ENCODE measurements at regions of chr6 and their contacts with region 1.

Region 1: DNA sequence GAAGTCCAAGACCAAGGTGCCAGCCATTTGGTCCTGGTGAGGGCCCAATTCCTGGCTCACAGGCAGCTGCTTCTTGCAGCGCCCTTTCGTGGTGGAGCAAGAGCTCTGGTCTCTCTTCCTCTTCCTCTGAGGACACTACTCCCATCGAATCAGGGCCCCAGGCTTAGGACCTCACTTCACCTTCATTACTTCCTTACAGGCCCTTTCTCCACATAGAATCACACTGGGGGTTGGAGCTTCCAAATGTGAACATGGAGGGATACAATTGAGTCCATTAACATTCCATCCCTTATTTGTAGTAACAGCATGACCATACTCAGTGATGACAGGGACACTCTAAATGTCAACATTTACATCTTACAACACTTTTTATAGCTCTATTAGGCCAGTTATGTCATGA is 2.3 kb downstream of the RAMACL start:
- DNase-seq: no peak
- ATAC-seq: no peak
- H3K4me3 ChIP-seq: no peak overlapping the region
- H3K27ac ChIP-seq: no peak overlapping the region
- H3K4me1 ChIP-seq: no peaks in the 10 kb centered on the region
- H3K27me3 ChIP-seq: no peaks in the 10 kb centered on the region
- CTCF ChIP-seq: no peak

Region 2: GRCh38 chr6:166253281-166253681 is 330.9 kb before region 1 on chr6:
- CTCF ChIA-PET with region 1: no interaction called
- POLR2A ChIA-PET with region 1: no interaction called
- in situ Hi-C with region 1: no loop called
- intact Hi-C with region 1: no loop called
- DNase-seq: no peak
- ATAC-seq: no peak
- H3K4me3 ChIP-seq: peak overlapping the region; percentile 4 to 5; a peak in 2 of 4 replicates
- H3K27ac ChIP-seq: no peak overlapping the region
- H3K4me1 ChIP-seq: no peaks in the 10 kb centered on the region
- H3K27me3 ChIP-seq: peaks cover 9% of the 10 kb centered on the region
- CTCF ChIP-seq: no peak

Region 3: GRCh38 chr6:166456395-166457156 is 127.6 kb before region 1 on chr6:
- CTCF ChIA-PET with region 1: no interaction called
- POLR2A ChIA-PET with region 1: no interaction called
- in situ Hi-C with region 1: no loop called
- intact Hi-C with region 1: no loop called
- DNase-seq: no peak
- ATAC-seq: 0 out of 2 replicates have a peak, but pooled peaks have one; percentile 56
- H3K4me3 ChIP-seq: no peak overlapping the region
- H3K27ac ChIP-seq: no peak overlapping the region
- H3K4me1 ChIP-seq: no peaks in the 10 kb centered on the region
- H3K27me3 ChIP-seq: no peaks in the 10 kb centered on the region
- CTCF ChIP-seq: no peak; the same call in 1 of the 2 replicates

Region 4: GRCh38 chr6:166540631-166541331 is 43.4 kb before region 1 on chr6:
- CTCF ChIA-PET with region 1: no interaction called
- POLR2A ChIA-PET with region 1: no interaction called
- in situ Hi-C with region 1: no loop called
- intact Hi-C with region 1: no loop called
- DNase-seq: no peak
- ATAC-seq: peak; percentile 73
- H3K4me3 ChIP-seq: peak overlapping the region in 1 of 2 experiments; percentile 26; a peak in 2 of 4 replicates
- H3K27ac ChIP-seq: no peak overlapping the region
- H3K4me1 ChIP-seq: peaks cover 11% of the 10 kb centered on the region; the same call in 1 of the 2 replicates
- H3K27me3 ChIP-seq: no peaks in the 10 kb centered on the region; the same call in 1 of the 2 replicates
- CTCF ChIP-seq: no peak

Region 5: GRCh38 chr6:166927240-166927934 is 343.2 kb after region 1 on chr6:
- CTCF ChIA-PET with region 1: no interaction called
- POLR2A ChIA-PET with region 1: interaction called, 15 read pairs
- in situ Hi-C with region 1: no loop called
- intact Hi-C with region 1: no loop called
- DNase-seq: no peak
- ATAC-seq: no peak
- H3K4me3 ChIP-seq: no peak overlapping the region
- H3K27ac ChIP-seq: no peak overlapping the region
- H3K4me1 ChIP-seq: no peaks in the 10 kb centered on the region
- H3K27me3 ChIP-seq: no peaks in the 10 kb centered on the region
- CTCF ChIP-seq: no peak

Region 6: DNA sequence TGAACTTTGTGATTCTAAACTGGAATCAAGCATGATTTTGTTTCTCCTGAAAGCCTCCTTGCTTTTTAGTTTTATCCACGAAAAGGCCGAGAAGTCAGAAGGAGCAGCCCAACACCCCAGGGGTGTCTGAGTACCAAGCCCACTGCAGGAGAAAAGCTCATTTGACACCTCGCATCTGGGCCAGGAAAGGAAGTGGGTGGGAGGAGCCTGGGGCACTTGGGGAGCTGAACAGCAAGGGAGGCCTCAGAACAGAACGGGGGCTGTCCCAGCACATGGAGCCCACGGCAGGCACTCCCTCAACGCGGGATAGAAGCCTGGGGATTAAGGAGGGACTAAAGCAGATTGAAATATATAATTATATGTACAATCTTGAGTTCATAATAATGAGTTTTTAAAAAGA is 1419.9 kb after region 1 on chr6:
- CTCF ChIA-PET with region 1: interaction called, 10 read pairs
- POLR2A ChIA-PET with region 1: no interaction called
- in situ Hi-C with region 1: no loop called
- intact Hi-C with region 1: no loop called
- DNase-seq: no peak
- ATAC-seq: no peak
- H3K4me3 ChIP-seq: no peak overlapping the region
- H3K27ac ChIP-seq: no peak overlapping the region
- H3K4me1 ChIP-seq: peaks cover 14% of the 10 kb centered on the region; the same call in 1 of the 2 replicates
- H3K27me3 ChIP-seq: no peaks in the 10 kb centered on the region
- CTCF ChIP-seq: no peak

Measured in Panc1 (cell line).